Ovary (tissue), 10 donors: ENCODE measurements at regions of chr11 and their contacts with region 1.

Region 1: DNA sequence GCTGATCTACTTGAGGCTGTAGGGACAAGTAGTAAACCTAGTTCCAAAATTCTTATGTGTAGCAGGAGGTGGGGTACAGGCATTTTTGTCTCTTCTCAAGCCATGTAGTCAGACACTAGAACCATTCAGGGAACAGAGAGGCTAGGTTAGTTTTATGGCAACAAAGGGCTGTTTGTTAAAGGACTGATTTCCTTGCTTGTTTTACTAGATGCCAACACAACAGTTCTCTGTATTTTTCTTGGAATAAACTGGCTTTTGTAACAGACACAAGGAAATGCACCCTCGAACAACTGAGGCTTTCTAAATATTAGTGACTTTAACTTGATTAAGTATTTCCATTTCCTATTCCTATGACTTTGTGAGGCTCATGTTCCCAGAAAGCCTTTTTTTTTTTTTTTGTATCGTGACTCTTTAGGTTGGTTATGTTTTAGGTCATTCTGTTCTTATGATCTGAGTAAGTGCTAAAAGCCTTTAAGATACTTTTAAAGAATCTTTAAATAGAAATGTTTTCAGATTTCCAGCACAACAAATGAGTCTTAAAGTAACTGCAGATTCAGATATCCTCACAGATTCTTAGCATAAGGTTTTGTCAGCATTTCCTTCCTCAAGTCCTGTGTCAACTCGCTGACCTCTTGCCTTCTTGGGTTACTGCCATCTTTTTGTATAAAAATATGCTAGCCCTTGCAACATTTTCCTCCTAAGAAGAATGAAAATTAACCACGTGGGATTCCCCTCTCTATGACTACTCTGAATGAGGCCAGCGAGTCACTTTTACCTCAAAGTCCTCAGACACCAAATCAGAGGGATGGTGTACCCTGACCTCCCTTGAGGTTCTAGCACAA is 92.5 kb downstream of the CCDC83 start:
- DNase-seq: peak in 3 of 5 donors; percentile 59 to 71 (median 60)
- H3K4me3 ChIP-seq: no peak overlapping the region
- H3K27ac ChIP-seq: peak overlapping the region in 1 of 2 donors; percentile 61
- H3K4me1 ChIP-seq: peaks cover 9% of the 10 kb centered on the region
- H3K27me3 ChIP-seq: no peaks in the 10 kb centered on the region
- CTCF ChIP-seq: no peak
- EP300 ChIP-seq: no peak
- POLR2A ChIP-seq: no peak

Region 2: GRCh38 chr11:85725510-85726258 is 222.0 kb before region 1 on chr11:
- intact Hi-C with region 1: no loop called
- DNase-seq: no peak
- H3K4me3 ChIP-seq: no peak overlapping the region
- H3K27ac ChIP-seq: no peak overlapping the region
- H3K4me1 ChIP-seq: no peaks in the 10 kb centered on the region
- H3K27me3 ChIP-seq: no peaks in the 10 kb centered on the region
- CTCF ChIP-seq: no peak
- EP300 ChIP-seq: no peak
- POLR2A ChIP-seq: no peak

Region 3: GRCh38 chr11:85961930-85962363 is 14.3 kb after region 1 on chr11:
- intact Hi-C with region 1: loop called in 1 of 4 experiments (anchors 1 kb)
- DNase-seq: no peak
- H3K4me3 ChIP-seq: no peak overlapping the region
- H3K27ac ChIP-seq: no peak overlapping the region
- H3K4me1 ChIP-seq: peaks cover 13% of the 10 kb centered on the region
- H3K27me3 ChIP-seq: no peaks in the 10 kb centered on the region
- CTCF ChIP-seq: no peak
- EP300 ChIP-seq: no peak
- POLR2A ChIP-seq: no peak

Region 4: GRCh38 chr11:86056351-86056854 is 108.8 kb after region 1 on chr11:
- intact Hi-C with region 1: no loop called
- DNase-seq: no peak
- H3K4me3 ChIP-seq: no peak overlapping the region
- H3K27ac ChIP-seq: no peak overlapping the region
- H3K4me1 ChIP-seq: peaks cover 6% of the 10 kb centered on the region
- H3K27me3 ChIP-seq: no peaks in the 10 kb centered on the region
- CTCF ChIP-seq: no peak
- EP300 ChIP-seq: no peak
- POLR2A ChIP-seq: no peak